ENCODE measurements at regions of chr7 and their contacts with region 1.

Region 1: GRCh38 chr7:37352974-37353948 is 95.4 kb downstream of the ELMO1 start:
- DNase-seq: peak; percentile 17 to 55
- H3K4me3 ChIP-seq: no peak overlapping the region
- H3K27ac ChIP-seq: no peak overlapping the region
- H3K4me1 ChIP-seq: peaks cover 2 to 7% (median 5%) of the 10 kb centered on the region in 4 experiments; a peak in 5 of 7 replicates
- H3K27me3 ChIP-seq: no peaks in the 10 kb centered on the region
- CTCF ChIP-seq: peak; percentile 50 to 72 (median 65)
- EP300 ChIP-seq: no peak
- POLR2A ChIP-seq: no peak
- RAD21 ChIP-seq: peak; percentile 77 to 83

Region 2: GRCh38 chr7:37186753-37187152 is 166.5 kb before region 1 on chr7:
- CTCF ChIA-PET with region 1: no interaction called
- POLR2A ChIA-PET with region 1: no interaction called
- DNase-seq: no peak
- H3K4me3 ChIP-seq: no peak overlapping the region
- H3K27ac ChIP-seq: no peak overlapping the region
- H3K4me1 ChIP-seq: no peaks in the 10 kb centered on the region; a peak in 2 of 7 replicates
- H3K27me3 ChIP-seq: no peaks in the 10 kb centered on the region
- CTCF ChIP-seq: no peak
- EP300 ChIP-seq: no peak
- POLR2A ChIP-seq: no peak
- RAD21 ChIP-seq: no peak

Region 3: DNA sequence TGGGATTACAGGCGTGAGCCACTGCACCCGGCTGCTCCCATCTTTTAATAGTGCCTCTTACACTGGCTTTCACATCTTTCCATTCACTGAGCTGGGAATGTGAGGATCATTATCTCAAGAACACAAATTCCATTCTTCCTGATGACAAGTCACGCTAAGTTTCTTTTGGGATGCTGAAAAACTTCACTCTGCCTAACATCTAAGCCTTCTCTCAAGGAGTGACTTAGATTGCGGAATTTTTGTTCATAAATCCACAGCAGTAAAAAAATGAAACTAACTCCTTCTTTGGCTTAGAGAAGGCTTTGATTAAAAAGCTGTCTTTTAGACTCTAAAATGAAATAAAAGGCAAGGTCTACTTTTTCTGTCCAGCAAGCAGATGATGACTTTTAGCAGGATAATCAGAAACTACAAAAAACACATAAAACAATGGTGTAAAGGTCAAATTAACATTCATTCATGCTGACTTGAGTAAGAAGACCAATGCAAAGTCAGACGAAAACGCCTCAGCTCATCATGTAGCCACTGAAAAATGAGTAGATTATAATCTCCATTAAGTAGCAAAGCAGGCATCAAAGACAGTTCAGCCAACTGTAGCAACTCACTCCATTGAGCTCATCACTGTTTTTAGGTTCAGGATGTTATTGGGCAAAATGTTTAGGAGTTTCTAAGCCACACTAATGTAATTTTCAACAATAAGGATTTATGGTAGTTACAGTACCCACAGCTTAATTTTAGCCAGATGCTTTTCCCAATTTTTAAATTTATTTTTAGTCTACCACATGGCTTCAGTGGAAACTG is 83.4 kb before region 1 on chr7:
- CTCF ChIA-PET with region 1: interaction called, 15 read pairs
- POLR2A ChIA-PET with region 1: no interaction called
- DNase-seq: no peak
- H3K4me3 ChIP-seq: no peak overlapping the region
- H3K27ac ChIP-seq: no peak overlapping the region
- H3K4me1 ChIP-seq: no peaks in the 10 kb centered on the region
- H3K27me3 ChIP-seq: no peaks in the 10 kb centered on the region
- CTCF ChIP-seq: no peak
- EP300 ChIP-seq: no peak
- POLR2A ChIP-seq: no peak
- RAD21 ChIP-seq: no peak

Region 4: DNA sequence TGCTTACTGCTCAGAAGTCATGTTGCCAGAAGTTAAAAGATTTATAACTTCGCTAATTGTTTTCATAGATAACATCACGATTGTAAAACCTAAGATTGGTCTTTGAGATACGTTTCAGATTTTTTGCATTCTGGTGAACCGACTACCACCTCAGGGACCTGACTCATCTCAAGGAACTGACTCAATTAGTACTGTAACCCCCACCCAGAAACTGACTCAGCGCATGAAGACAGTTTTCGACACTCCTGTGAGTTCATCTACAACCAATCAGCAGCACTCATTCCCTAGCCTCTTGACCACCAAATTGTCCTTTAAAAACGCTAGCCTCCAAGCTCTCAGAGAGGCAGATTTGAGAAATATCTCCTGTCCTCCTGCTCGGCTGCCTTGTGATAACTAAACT is 23.1 kb after region 1 on chr7:
- CTCF ChIA-PET with region 1: no interaction called
- POLR2A ChIA-PET with region 1: no interaction called
- DNase-seq: no peak
- H3K4me3 ChIP-seq: no peak overlapping the region
- H3K27ac ChIP-seq: no peak overlapping the region
- H3K4me1 ChIP-seq: peaks cover 0 to 3% (median under 1%) of the 10 kb centered on the region in 4 experiments; a peak in 2 of 7 replicates
- H3K27me3 ChIP-seq: no peaks in the 10 kb centered on the region
- CTCF ChIP-seq: no peak
- EP300 ChIP-seq: no peak
- POLR2A ChIP-seq: no peak
- RAD21 ChIP-seq: no peak

Region 5: GRCh38 chr7:37516610-37517108 is 163.4 kb after region 1 on chr7:
- CTCF ChIA-PET with region 1: no interaction called
- POLR2A ChIA-PET with region 1: no interaction called
- DNase-seq: no peak
- H3K4me3 ChIP-seq: no peak overlapping the region
- H3K27ac ChIP-seq: no peak overlapping the region
- H3K4me1 ChIP-seq: no peaks in the 10 kb centered on the region
- H3K27me3 ChIP-seq: no peaks in the 10 kb centered on the region
- CTCF ChIP-seq: no peak
- EP300 ChIP-seq: no peak
- POLR2A ChIP-seq: no peak
- RAD21 ChIP-seq: no peak

Measured in H1 (cell line).